A549 (cell line): ENCODE measurements at regions of chr15 and their contacts with region 1.

Region 1: GRCh38 chr15:69452692-69453521 is at the start of gene RPLP1:
- DNase-seq: peak; percentile 94 to 97
- ATAC-seq: peak; percentile 80 to 88
- H3K4me3 ChIP-seq: peak within 1 kb of the TSS; percentile 94
- H3K27ac ChIP-seq: peak within 1 kb of the TSS; percentile 90 to 93
- H3K4me1 ChIP-seq: peaks cover 36% of the 10 kb centered on the region
- CTCF ChIP-seq: no peak
- EP300 ChIP-seq: no peak
- POLR2A ChIP-seq: peak; percentile 100
- RAD21 ChIP-seq: no peak
- polyA plus RNA-seq, gene RPLP1: 1,245 and 1,557 TPM in 2 replicates

Region 2: DNA sequence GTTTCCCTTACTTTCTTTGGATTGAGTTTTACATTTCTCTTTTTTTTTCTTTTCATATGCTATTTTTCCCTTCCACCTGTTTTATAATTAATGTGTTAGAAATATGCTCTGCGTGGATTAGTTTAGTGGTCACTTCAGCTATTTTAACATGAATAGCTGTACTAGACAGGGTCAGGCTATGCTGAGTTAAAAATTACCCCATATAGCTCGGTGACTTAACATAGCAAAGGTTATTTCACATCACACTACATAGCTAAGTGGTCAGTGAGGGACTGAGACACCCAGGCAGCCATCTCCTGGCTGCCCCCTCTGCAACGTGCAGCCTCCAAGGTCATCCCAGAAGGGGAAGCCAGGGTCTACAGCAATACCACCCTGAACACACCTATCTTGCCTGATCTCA is 85.7 kb before region 1 on chr15:
- CTCF ChIA-PET with region 1: no interaction called
- POLR2A ChIA-PET with region 1: no interaction called
- DNase-seq: no peak
- ATAC-seq: no peak
- H3K4me3 ChIP-seq: no peak overlapping the region
- H3K27ac ChIP-seq: no peak overlapping the region
- H3K4me1 ChIP-seq: peaks cover 10% of the 10 kb centered on the region; the same call in 2 of the 3 replicates
- CTCF ChIP-seq: no peak
- EP300 ChIP-seq: no peak
- POLR2A ChIP-seq: no peak
- RAD21 ChIP-seq: no peak

Region 3: GRCh38 chr15:69413822-69414700 is 38.8 kb before region 1 on chr15 and contains the start of gene KIF23:
- CTCF ChIA-PET with region 1: interaction called, 3 read pairs
- POLR2A ChIA-PET with region 1: interaction called, 43 read pairs
- DNase-seq: peak; percentile 97 to 99
- ATAC-seq: peak; percentile 93 to 96
- H3K4me3 ChIP-seq: peak within 1 kb of the TSS; percentile 83
- H3K27ac ChIP-seq: peak within 1 kb of the TSS; percentile 83 to 93
- H3K4me1 ChIP-seq: peaks cover 43% of the 10 kb centered on the region
- CTCF ChIP-seq: no peak
- EP300 ChIP-seq: no peak
- POLR2A ChIP-seq: peak; percentile 56
- RAD21 ChIP-seq: no peak
- polyA plus RNA-seq, gene KIF23: 79.5 and 117 TPM in 2 replicates

Region 4: DNA sequence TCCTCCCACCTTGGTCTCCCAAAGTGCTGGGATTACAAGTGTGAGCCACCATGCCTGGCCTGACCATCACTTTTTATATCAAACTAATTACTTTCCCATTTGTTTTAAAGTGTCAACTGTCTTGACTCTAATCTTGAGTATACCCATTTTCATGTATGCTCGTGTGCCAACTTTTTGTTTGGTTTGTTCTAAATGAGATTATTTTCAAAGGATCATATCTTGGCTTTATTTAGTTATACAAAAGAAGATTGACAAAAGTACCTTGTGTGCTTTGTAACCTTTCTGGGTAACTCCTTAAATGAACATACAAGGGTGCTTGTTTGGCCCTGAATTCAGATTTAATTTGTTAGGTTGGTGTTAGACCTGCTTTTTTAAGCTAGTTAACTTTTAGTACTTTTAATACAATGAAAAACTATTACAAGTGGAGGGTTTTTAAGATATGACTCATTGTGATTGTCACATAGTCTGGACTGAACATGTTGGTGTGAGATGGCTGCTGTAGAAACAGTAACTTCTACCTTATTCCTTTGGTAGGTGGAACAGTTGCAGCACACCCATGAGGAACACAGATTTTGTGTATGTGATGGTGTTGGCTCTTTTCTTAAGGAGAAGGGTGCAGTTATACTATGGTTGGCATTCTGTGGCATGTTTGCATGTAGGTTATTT is 28.0 kb before region 1 on chr15:
- CTCF ChIA-PET with region 1: interaction called, 3 read pairs
- POLR2A ChIA-PET with region 1: interaction called, 12 read pairs
- DNase-seq: no peak
- ATAC-seq: no peak
- H3K4me3 ChIP-seq: no peak overlapping the region
- H3K27ac ChIP-seq: no peak overlapping the region
- H3K4me1 ChIP-seq: no peaks in the 10 kb centered on the region
- CTCF ChIP-seq: no peak
- EP300 ChIP-seq: no peak
- POLR2A ChIP-seq: no peak
- RAD21 ChIP-seq: no peak